ENCODE measurements at regions of chr22 and their contacts with region 1.

Region 1: GRCh38 chr22:37623075-37624016 is 14.7 kb downstream of the GGA1 start:
- DNase-seq: peak in 4 of 5 donors; percentile 61 to 84 (median 68)
- ATAC-seq: peak; percentile 49 to 69 (median 64)
- H3K4me3 ChIP-seq: no peak overlapping the region
- H3K27ac ChIP-seq: peak overlapping the region in 2 of 12 donors; percentile 47 to 90
- H3K4me1 ChIP-seq: peaks cover 0 to 40% (median 25%) of the 10 kb centered on the region in 12 donors
- H3K27me3 ChIP-seq: no peaks in the 10 kb centered on the region
- CTCF ChIP-seq: peak; percentile 75 to 91 (median 84)
- POLR2A ChIP-seq: no peak

Region 2: DNA sequence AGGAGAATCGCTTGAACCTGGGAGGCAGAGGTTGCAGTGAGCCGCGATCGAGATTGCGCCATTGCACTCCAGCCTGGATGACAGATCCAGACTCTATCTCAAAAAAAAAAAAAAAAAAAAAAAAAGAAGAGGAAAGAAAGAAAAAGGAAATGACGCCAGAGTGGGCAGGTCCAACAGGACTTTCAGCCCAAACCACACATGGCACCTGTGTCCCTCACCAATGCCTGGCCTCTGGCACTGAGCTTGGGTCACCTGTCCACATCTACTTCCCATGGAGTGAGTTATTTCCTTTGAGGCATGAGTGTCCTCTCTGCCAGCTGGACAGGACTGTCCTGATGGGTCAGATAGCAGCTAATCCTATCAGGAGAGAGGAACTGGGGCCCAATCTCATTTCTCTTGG is 169.1 kb after region 1 on chr22:
- intact Hi-C with region 1: loop called in 3 of 10 experiments (anchors 5 kb)
- DNase-seq: no peak
- ATAC-seq: no peak
- H3K4me3 ChIP-seq: no peak overlapping the region
- H3K27ac ChIP-seq: no peak overlapping the region
- H3K4me1 ChIP-seq: no peaks in the 10 kb centered on the region
- H3K27me3 ChIP-seq: no peaks in the 10 kb centered on the region
- CTCF ChIP-seq: no peak
- POLR2A ChIP-seq: no peak